Heart right ventricle (tissue), 16 donors: ENCODE measurements at regions of chr5 and their contacts with region 1.

Region 1: DNA sequence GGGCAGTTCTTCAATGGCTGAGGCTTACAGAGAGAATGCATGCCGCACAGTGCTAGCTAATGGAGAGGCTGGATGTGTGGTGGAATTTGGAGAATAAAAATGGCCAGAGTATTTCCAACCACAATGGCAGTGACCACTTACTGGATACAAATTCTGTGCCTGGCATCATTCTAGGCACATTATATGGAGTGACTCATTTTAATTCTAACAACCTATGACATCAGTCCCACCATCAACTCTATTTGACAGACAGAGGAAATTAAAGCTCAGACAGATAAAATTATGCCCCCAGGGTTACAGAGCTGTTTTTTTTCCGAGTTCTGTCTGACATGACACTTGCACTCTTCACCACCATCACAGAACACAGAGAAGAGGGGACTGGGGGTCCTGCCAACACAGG is 105.6 kb upstream of the IL12B start:
- DNase-seq: no peak
- ATAC-seq: no peak
- H3K4me3 ChIP-seq: no peak overlapping the region
- H3K27ac ChIP-seq: no peak overlapping the region
- H3K4me1 ChIP-seq: peaks cover 0 to 8% (median 0%) of the 10 kb centered on the region in 9 donors
- H3K27me3 ChIP-seq: no peaks in the 10 kb centered on the region
- CTCF ChIP-seq: no peak

Region 2: DNA sequence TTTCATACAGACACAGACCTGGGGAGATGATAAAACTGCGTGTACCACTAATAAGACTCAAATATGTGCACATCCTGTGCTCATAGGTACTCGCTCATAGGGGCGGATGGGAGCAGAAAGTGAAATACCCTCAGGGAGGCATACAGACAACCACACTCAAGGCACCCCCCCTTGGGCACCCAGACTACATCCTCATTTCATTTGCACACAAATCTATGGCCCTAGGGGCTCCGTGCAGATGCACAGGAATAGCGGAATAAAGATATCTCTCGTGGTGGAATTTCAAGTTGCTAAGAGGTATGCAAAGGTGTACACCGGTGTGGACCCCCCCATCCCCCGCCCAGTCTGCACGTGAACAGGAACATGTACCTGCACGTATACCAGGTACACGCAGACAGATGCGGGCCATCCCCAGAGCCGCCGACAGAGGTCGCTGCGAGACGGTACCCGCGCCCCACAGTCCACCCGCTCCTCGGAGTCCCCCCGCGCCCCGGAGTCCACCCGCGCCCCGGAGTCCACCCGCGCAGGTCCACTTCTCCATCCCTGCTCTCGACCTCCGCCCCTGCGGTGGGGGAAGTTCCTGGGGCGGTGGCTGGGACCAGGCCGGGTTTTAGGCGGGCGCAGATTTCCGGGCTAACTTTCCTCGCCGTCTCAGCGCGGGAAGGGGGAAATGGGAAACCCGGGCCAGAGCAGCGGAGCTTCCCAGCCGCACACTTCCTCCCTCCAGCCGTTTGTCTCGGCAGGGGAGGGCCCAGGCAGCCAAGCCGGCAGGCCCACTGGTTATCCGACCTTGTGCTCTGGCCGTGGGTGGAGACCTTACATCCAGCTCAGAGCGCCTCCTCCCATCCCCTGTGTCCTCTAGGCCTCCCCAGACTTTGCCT is 104.5 kb before region 1 on chr5:
- intact Hi-C with region 1: loop called in 1 of 10 experiments (anchors 5 kb)
- DNase-seq: peak; percentile 56 to 73
- ATAC-seq: peak; percentile 82 to 93 (median 91)
- H3K4me3 ChIP-seq: peak overlapping the region; percentile 34 to 61 (median 50)
- H3K27ac ChIP-seq: peak overlapping the region in 5 of 10 donors; percentile 2 to 71 (median 48)
- H3K4me1 ChIP-seq: peaks cover 3 to 12% (median 10%) of the 10 kb centered on the region in 9 donors
- H3K27me3 ChIP-seq: peaks cover 0 to 33% (median 6%) of the 10 kb centered on the region in 7 donors
- CTCF ChIP-seq: peak; percentile 48 to 84 (median 78)

Region 3: GRCh38 chr5:159393854-159394274 is 42.0 kb before region 1 on chr5:
- intact Hi-C with region 1: no loop called
- DNase-seq: no peak
- ATAC-seq: no peak
- H3K4me3 ChIP-seq: no peak overlapping the region
- H3K27ac ChIP-seq: no peak overlapping the region
- H3K4me1 ChIP-seq: no peaks in the 10 kb centered on the region
- H3K27me3 ChIP-seq: peaks cover 0 to 7% (median 0%) of the 10 kb centered on the region in 7 donors
- CTCF ChIP-seq: no peak

Region 4: DNA sequence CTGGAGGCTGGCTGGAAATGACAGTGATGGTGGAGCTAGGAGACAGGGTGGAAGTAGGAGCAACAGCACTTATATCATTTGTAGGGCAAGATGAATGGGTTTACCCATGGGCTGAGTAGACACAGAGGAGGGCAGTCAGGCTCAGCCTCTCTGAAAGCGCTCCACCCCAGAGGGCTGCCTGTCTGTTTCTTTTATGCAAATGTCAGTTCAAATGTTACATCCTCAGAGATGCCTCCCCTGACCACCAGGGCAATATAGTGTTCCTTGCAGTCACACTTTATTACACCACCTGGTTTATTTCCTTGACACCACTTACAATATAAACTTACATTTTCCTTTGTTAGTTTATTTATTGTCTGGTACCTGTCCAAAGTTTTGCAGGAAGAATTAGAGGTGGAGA is 53.9 kb after region 1 on chr5:
- intact Hi-C with region 1: no loop called
- DNase-seq: no peak
- ATAC-seq: no peak
- H3K4me3 ChIP-seq: no peak overlapping the region
- H3K27ac ChIP-seq: no peak overlapping the region
- H3K4me1 ChIP-seq: no peaks in the 10 kb centered on the region
- H3K27me3 ChIP-seq: no peaks in the 10 kb centered on the region
- CTCF ChIP-seq: no peak